AG04450 (cell line): ENCODE measurements at regions of chr12 and their contacts with region 1.

Region 1: DNA sequence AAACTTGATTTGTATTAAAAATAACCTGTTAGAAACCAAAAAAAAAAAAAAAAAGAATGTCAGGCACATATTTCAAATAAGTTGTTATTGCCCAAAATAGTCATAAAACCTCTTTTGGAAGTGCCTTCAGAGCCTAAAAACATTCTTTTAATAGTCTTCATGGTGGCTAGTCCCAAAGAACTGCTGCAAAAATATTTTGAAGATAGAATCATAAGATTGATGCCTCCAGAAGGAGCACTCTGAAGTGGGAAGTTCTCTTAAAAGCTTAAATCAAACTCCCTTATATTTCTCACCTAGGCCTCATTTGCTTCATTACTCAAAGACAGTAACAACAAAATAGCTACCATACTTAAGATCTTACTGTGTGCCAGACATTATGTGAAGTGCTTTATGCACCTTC is 27.2 kb upstream of the NT5DC3 start:
- DNase-seq: no peak
- H3K4me3 ChIP-seq: no peak overlapping the region
- H3K27ac ChIP-seq: no peak overlapping the region
- H3K27me3 ChIP-seq: no peaks in the 10 kb centered on the region
- CTCF ChIP-seq: no peak

Region 2: GRCh38 chr12:103571286-103571685 is 296.9 kb before region 1 on chr12:
- CTCF ChIA-PET with region 1: interaction called, 26 read pairs
- POLR2A ChIA-PET with region 1: no interaction called
- DNase-seq: no peak
- H3K4me3 ChIP-seq: no peak overlapping the region
- H3K27ac ChIP-seq: no peak overlapping the region
- H3K27me3 ChIP-seq: peaks cover 8% of the 10 kb centered on the region
- CTCF ChIP-seq: no peak

Region 3: GRCh38 chr12:103705927-103706326 is 162.3 kb before region 1 on chr12:
- CTCF ChIA-PET with region 1: no interaction called
- POLR2A ChIA-PET with region 1: no interaction called
- DNase-seq: no peak
- H3K4me3 ChIP-seq: no peak overlapping the region
- H3K27ac ChIP-seq: no peak overlapping the region
- H3K27me3 ChIP-seq: peaks cover 14% of the 10 kb centered on the region
- CTCF ChIP-seq: no peak

Region 4: GRCh38 chr12:103840876-103841689 is 27.1 kb before region 1 on chr12 and contains the start of gene NT5DC3:
- CTCF ChIA-PET with region 1: interaction called, 12 read pairs
- POLR2A ChIA-PET with region 1: interaction called, 4 read pairs
- DNase-seq: peak; percentile 47
- H3K4me3 ChIP-seq: peak within 1 kb of the TSS; percentile 73
- H3K27ac ChIP-seq: no peak within 1 kb of the TSS
- H3K27me3 ChIP-seq: no peaks in the 10 kb centered on the region
- CTCF ChIP-seq: no peak
- polyA plus RNA-seq, gene NT5DC3: 2.8 and 3.4 TPM in 2 replicates

Region 5: GRCh38 chr12:103897316-103897715 is 29.1 kb after region 1 on chr12:
- CTCF ChIA-PET with region 1: no interaction called
- POLR2A ChIA-PET with region 1: no interaction called
- DNase-seq: no peak
- H3K4me3 ChIP-seq: no peak overlapping the region
- H3K27ac ChIP-seq: no peak overlapping the region
- H3K27me3 ChIP-seq: peaks cover 14% of the 10 kb centered on the region
- CTCF ChIP-seq: no peak

Region 6: DNA sequence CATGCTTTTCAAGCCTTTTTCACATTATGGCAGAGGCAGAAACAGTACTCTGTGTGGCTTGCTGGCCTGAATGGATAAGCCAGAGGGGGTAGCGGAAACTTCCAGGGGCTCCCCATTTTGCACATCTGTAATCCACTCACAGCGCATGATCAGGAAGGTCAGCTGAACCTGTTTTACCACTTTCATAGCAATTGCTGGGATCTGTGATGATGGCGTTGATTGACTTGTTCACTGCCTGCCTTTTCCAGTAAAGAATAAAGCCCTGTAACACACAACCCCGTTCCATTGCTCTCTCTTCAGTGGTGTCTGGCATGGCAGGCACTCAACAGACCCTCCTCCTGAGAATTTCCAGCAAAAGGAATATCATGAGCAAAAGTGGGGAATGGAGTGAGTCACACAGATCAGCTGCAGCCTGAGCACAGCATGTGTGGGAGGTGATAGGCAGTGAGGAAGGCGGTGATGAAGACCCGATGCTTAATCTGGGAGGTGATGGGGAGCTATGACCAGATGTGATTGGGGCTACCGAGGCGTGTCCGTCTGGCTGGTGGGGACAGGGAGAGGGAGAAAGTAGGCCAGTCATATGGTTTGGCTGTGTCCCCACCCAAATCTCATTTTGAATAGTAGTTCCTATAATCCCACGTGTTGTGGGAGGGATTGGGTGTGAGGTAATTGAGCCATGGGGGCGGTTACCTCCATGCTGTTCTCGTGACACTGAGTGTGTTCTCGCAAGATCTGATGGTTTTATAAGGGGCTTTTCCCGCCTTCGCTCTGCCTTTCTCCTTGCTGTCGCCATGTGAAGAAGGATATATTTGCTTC is 543.8 kb after region 1 on chr12:
- CTCF ChIA-PET with region 1: no interaction called
- POLR2A ChIA-PET with region 1: no interaction called
- DNase-seq: no peak
- H3K4me3 ChIP-seq: no peak overlapping the region
- H3K27ac ChIP-seq: no peak overlapping the region
- H3K27me3 ChIP-seq: peaks cover 10% of the 10 kb centered on the region
- CTCF ChIP-seq: no peak